ENCODE measurements at regions of chr7 and their contacts with region 1.

Region 1: DNA sequence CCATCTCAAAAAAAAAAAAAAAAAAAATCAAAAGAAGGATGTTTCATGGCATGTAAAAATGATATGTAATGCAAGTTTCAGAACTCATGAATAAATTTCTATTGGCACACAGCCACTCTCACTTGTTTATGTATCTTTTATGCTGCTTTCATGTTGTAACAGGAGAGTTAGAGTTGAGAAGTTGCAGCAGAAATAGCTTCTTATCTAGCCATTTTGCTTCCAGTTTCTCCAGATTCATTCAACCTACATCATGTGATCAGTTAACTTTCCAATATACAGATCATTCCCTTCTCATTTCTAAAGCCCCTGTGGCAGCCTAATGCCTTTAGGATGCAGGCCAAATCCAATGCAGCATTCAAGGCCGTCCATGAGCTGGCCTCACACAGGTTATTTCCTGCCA is 30.4 kb downstream of the ZNF786 start:
- DNase-seq: no peak
- ATAC-seq: no peak
- H3K4me3 ChIP-seq: no peak overlapping the region
- H3K27ac ChIP-seq: no peak overlapping the region
- H3K4me1 ChIP-seq: no peaks in the 10 kb centered on the region
- H3K27me3 ChIP-seq: no peaks in the 10 kb centered on the region
- CTCF ChIP-seq: no peak

Region 2: DNA sequence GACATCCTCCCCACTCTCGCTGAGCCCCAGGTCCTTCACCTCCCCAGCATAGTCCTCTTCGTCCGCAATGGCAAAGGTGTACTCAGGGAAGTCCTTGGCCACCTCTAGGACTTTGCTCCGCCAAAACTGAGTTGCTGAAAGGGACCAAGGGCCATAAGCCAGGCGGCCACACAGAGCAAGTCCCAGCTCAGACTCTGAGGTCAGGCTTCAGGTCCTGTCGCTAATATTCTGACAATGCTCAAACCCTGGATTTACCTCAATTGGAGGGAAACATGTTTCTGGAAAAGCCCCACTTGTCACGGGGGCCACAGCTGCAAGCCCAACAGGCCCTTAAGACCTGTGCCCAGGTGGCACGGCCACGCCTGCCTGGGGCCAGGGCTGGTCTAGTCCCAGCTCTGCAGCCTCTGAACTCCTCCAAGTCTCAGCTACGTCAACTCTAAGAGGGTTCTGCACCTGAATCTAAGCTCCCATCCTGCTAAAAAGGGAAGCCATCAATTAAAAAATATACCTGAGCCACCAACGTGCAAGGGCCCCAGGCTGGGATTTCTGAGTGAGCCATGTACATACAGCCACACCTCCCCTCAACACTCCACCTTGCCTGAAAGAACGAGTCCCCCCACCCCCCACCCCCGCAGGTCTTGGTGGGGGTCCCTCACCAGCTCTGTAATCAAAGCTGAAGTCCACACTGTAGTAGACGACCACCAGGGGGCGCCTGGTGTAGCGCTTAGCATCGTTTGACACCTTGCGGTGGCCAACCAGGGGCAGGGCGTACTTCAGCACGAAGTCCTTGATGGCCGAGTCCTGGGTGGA is 54.7 kb before region 1 on chr7:
- intact Hi-C with region 1: loop called in 1 of 3 experiments (anchors 5 kb)
- DNase-seq: peak; percentile 58 to 93 (median 76)
- ATAC-seq: peak; percentile 66 to 90 (median 86)
- H3K4me3 ChIP-seq: no peak overlapping the region
- H3K27ac ChIP-seq: no peak overlapping the region
- H3K4me1 ChIP-seq: no peaks in the 10 kb centered on the region
- H3K27me3 ChIP-seq: no peaks in the 10 kb centered on the region
- CTCF ChIP-seq: peak; percentile 67 to 84 (median 78)